Right ventricle myocardium inferior (tissue), 1 donor: ENCODE measurements at regions of chr19 and their contacts with region 1.

Region 1: DNA sequence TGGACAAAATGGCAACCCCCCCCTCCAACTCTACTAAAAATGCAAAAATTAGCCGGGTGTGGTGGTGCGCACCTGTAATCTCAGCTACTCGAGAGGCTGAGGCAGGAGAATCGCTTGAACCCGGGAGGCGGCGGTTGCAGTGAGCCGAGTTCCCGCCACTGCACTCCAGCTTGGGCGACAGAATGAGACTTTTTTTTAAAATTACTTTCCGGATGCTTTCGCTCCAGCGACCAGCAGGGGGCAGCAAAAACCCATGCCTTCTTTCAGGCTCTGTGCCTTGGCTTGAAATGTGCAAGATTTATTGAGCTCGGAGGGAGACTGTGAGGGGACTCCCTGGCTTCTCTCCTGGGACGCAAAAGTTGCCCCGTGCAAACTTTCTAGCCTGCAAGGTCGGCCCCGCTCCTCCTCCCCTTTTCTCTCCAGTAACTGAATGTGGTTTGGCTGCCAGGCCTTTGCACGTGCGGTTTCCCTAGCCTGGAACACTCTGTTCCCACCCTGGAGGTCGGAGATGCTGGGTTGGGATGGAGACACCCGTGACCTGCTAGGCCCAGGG is 61.4 kb upstream of the NFIC start:
- DNase-seq: no peak
- ATAC-seq: peak; percentile 46

Region 2: DNA sequence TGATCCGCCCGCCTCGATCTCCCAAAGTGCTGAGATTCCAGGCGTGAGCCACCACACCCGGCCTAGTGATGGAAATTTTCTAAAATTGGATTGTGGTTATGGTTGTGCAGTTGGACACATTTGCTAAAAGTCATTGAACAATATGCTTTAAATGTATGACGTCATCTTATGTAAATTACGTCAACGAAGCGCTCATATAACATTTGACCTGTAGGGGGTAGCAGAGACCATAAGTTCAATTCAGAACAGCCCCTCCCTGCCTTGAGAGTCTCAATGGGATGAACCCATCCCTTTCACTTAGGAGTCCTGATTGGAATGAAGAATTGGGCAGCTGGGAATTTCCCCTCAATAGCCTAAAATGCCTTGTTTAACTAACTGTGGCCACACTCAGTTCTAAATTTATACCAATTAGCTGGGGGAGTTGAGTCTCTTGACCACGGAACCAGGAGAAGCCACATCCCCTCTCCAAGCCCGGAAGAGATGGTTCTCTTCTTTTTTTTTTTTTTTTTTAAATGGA is 342.8 kb before region 1 on chr19:
- intact Hi-C with region 1: no loop called
- DNase-seq: no peak
- ATAC-seq: peak; percentile 90

Region 3: GRCh38 chr19:3289971-3290569 is 14.9 kb before region 1 on chr19:
- intact Hi-C with region 1: no loop called
- DNase-seq: no peak
- ATAC-seq: no peak

Region 4: DNA sequence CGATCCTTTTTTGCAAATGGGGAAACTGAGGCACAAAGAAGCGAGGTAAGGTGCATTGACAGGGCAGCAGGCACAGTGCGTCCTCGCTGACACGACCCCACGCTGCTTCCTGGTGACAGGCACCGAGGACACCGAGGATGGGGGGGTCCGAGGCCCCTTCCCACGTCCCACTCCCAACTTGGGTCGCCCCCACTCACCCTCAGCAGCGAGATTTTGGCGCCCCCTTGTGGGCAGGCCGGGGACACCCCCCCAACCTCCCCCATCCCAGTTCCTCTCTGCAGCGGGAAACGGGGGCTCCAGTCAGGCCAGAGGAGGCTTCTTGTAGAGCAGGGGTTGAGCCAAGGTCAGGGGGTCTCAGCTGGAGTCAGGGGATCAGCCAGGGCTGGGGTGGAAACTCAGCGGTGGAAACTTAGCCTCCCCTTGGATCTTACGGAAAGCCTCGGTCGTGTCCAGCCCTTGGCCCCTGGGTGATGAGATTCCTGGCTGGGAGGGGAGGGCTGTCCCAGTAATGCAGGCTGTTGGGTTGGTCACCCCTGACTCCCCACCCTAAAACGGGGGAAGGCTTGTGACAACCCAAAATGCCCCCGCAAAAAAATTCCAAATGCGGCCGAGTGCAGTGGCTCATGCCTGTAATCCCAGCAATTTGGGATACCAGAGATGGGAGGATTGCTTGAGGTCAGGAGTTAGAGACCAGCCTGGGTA is 167.2 kb after region 1 on chr19:
- intact Hi-C with region 1: loop called (anchors 2 kb)
- DNase-seq: no peak
- ATAC-seq: peak; percentile 62